CD14-positive monocyte (primary cell): ENCODE measurements at regions of chr12 and their contacts with region 1.

Region 1: GRCh38 chr12:93677195-93678064 is at the start of gene CRADD:
- DNase-seq: peak; percentile 96 to 98 (median 98)
- H3K4me3 ChIP-seq: peak within 1 kb of the TSS; percentile 69 to 95 (median 83)
- H3K4me3 Mint-ChIP-seq: peak within 1 kb of the TSS; percentile 95 to 99
- H3K27ac ChIP-seq: peak within 1 kb of the TSS; percentile 98 to 100
- H3K27ac Mint-ChIP-seq: peak within 1 kb of the TSS; percentile 99 to 100 (median 100)
- H3K4me1 ChIP-seq: peaks cover 13 to 19% of the 10 kb centered on the region in 2 donors
- H3K4me1 Mint-ChIP-seq: peaks cover 21% of the 10 kb centered on the region
- H3K27me3 ChIP-seq: no peaks in the 10 kb centered on the region
- H3K27me3 Mint-ChIP-seq: peaks cover 0 to 5% (median 1%) of the 10 kb centered on the region in 3 donors
- CTCF ChIP-seq: no peak
- polyA plus RNA-seq, gene CRADD: 5.6 to 12.2 (median 11.2) TPM

Region 2: DNA sequence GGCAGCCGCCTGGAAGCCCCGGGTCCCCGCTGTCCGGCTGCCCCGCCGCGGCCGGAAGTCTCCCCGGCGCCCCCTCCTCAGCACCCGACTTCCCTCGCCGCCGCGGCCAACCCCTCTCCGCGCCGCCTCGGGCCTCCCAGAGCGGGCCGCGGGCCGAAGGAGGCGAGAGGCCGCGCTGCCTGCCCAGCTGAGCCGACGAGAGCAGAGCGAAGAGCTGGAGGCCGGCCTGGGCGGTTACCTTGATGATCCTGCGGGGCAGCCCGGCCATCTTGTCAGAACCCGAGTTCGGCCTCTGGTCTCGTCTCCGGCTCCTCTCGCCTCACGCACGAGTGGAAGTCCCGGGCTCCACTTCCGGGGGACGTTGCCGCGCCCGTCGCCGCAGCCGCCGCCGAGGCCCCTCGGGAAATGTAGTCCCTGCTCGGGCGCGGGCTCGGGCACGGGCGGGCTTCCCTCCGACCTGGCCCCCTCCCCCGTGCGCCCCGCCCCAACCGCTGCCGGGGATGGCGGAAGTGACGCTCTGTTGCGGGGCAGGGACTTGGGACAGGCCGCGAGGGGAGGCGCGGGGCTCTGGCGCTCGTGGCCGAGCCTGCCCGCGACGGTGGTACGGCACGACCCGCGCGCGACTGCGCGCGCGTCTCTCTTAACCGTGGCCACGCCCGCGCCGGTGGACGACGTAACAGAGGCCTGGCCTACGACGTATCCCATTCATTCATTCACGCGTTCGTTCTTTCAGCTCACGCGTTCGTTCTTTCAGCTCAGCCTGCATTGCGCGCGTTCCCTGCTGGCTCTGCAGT is 235.6 kb before region 1 on chr12 and contains the start of gene UBE2N:
- intact Hi-C with region 1: loop called in 1 of 2 experiments (anchors 10 kb)
- DNase-seq: peak; percentile 92 to 96 (median 93)
- H3K4me3 ChIP-seq: peak within 1 kb of the TSS; percentile 81 to 91 (median 83)
- H3K4me3 Mint-ChIP-seq: peak within 1 kb of the TSS; percentile 94 to 98
- H3K27ac ChIP-seq: peak within 1 kb of the TSS; percentile 81 to 91
- H3K27ac Mint-ChIP-seq: peak within 1 kb of the TSS; percentile 96 to 98 (median 96)
- H3K4me1 ChIP-seq: peaks cover 30 to 44% of the 10 kb centered on the region in 2 donors
- H3K4me1 Mint-ChIP-seq: peaks cover 46% of the 10 kb centered on the region
- H3K27me3 ChIP-seq: no peaks in the 10 kb centered on the region
- H3K27me3 Mint-ChIP-seq: no peaks in the 10 kb centered on the region
- CTCF ChIP-seq: no peak
- polyA plus RNA-seq, gene UBE2N: 31.2 to 119 (median 108) TPM

Region 3: DNA sequence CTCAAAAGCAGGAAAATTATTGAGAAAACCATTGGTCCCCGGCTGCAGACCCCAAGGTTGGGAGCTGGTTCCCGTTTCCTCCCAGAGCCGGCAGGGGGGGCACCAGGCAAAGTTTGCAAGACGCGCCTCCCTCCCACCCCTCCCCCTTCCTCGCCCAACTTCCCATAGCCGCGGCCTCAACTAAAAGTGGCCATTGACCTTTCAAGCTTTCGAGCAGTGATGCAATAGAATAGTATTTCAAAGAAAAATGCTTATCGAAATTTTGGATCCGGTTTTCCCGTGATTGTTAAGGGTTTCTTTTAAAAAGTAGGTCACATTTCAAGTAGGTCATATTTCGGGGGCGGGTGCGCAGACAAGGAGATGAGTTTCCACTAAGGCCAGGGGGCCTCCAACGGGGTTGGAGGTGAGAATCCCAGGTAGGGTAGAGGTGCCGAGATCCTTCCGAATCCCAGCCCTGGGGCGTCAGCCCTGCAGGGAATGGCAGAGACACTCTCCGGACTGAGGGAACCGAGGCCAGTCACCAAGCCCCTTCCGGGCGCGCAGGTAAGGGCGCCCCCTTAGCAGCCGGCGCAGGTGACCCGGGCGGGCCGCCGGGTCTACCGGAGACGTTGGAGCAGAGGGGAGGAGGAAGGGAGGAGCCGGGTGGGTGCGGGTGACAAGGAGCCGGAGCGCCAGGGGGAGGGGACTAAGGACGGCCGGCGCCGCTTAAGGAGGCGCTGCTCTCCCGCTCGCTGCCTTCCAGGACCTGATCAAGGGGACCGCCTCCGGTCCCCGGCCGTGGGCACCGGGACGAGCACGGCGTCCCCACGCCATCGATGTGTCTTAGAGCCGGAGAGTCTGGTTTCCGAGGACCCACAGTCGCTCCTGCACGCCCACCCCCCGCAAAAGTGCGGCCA is 107.5 kb before region 1 on chr12:
- intact Hi-C with region 1: loop called (anchors 5 kb)
- DNase-seq: peak; percentile 69 to 81 (median 76)
- H3K4me3 ChIP-seq: peak overlapping the region; percentile 37 to 79 (median 54)
- H3K4me3 Mint-ChIP-seq: peak overlapping the region; percentile 81 to 93
- H3K27ac ChIP-seq: no peak overlapping the region
- H3K27ac Mint-ChIP-seq: peak overlapping the region in 3 of 7 donors; percentile 33 to 86 (median 53)
- H3K4me1 ChIP-seq: peaks cover 35 to 43% of the 10 kb centered on the region in 2 donors
- H3K4me1 Mint-ChIP-seq: peaks cover 31% of the 10 kb centered on the region
- H3K27me3 ChIP-seq: peaks cover 37 to 63% of the 10 kb centered on the region in 2 donors
- H3K27me3 Mint-ChIP-seq: peaks cover 56 to 76% (median 64%) of the 10 kb centered on the region in 3 donors
- CTCF ChIP-seq: peak; percentile 74

Region 4: GRCh38 chr12:93742110-93742934 is 64.9 kb after region 1 on chr12:
- intact Hi-C with region 1: loop called (anchors 5 to 10 kb)
- DNase-seq: peak; percentile 15 to 49 (median 38)
- H3K4me3 ChIP-seq: peak overlapping the region; percentile 89 to 95 (median 89)
- H3K4me3 Mint-ChIP-seq: peak overlapping the region; percentile 96 to 99
- H3K27ac ChIP-seq: peak overlapping the region in 1 of 2 donors; percentile 47
- H3K27ac Mint-ChIP-seq: peak overlapping the region in 6 of 7 donors; percentile 61 to 76 (median 66)
- H3K4me1 ChIP-seq: peaks cover 11 to 17% of the 10 kb centered on the region in 2 donors
- H3K4me1 Mint-ChIP-seq: peaks cover 38% of the 10 kb centered on the region
- H3K27me3 ChIP-seq: peaks cover 0 to 4% of the 10 kb centered on the region in 2 donors
- H3K27me3 Mint-ChIP-seq: peaks cover 2 to 15% (median 5%) of the 10 kb centered on the region in 3 donors
- CTCF ChIP-seq: no peak

Region 5: DNA sequence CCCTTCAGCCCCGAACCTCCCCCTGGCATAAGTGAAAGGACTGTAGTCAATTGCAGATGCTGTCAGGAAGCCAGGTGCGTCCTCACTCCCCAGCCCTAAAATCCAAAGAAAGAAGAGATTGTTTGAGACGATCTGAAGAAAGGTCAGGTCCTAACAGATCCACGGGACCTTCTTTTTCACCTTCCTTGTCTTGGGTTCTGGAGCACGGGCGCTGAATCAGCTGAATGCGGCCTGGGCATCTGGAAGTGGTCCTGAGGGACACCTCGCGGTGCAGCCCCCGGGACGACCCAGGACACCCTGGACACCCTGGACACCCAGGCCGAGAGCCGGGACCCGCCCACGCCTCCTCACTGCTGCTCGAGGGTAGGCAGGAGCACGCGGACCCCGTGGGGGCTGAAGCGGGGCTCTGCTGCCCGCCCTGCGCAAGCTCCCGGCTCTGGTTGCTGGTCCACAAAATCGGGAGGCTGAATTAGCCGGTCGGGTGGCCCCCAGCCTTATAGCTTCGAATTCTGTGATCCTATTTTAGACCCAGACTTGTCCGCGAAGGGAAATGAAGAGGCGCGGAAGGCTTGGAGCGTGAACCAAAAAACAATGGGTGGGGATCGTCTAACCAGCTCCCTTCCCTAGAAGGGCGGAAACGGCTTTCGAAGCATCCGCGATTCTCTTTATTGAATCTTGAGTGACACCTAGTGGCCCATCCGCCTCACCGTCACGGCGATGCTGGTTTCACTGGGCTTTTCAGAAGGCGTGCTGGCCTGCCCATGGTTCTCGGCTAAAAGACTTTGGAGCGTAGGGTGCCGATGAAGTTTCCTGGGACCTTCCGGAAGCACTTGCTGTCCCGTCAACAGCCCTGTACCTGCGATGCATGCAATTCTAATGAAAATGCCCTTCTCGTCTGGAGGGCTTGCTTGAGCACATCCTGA is 424.6 kb after region 1 on chr12:
- intact Hi-C with region 1: loop called in 1 of 2 experiments (anchors 5 kb)
- DNase-seq: peak; percentile 76 to 88 (median 78)
- H3K4me3 ChIP-seq: peak overlapping the region; percentile 14 to 84 (median 54)
- H3K4me3 Mint-ChIP-seq: peak overlapping the region; percentile 76 to 86
- H3K27ac ChIP-seq: no peak overlapping the region
- H3K27ac Mint-ChIP-seq: peak overlapping the region in 3 of 7 donors; percentile 26 to 66 (median 44)
- H3K4me1 ChIP-seq: peaks cover 16 to 18% of the 10 kb centered on the region in 2 donors
- H3K4me1 Mint-ChIP-seq: peaks cover 20% of the 10 kb centered on the region
- H3K27me3 ChIP-seq: peaks cover 14 to 34% of the 10 kb centered on the region in 2 donors
- H3K27me3 Mint-ChIP-seq: peaks cover 26 to 44% (median 32%) of the 10 kb centered on the region in 3 donors
- CTCF ChIP-seq: peak; percentile 76